Heart right ventricle (tissue), 16 donors: ENCODE measurements at regions of chr20 and their contacts with region 1.

Region 1: DNA sequence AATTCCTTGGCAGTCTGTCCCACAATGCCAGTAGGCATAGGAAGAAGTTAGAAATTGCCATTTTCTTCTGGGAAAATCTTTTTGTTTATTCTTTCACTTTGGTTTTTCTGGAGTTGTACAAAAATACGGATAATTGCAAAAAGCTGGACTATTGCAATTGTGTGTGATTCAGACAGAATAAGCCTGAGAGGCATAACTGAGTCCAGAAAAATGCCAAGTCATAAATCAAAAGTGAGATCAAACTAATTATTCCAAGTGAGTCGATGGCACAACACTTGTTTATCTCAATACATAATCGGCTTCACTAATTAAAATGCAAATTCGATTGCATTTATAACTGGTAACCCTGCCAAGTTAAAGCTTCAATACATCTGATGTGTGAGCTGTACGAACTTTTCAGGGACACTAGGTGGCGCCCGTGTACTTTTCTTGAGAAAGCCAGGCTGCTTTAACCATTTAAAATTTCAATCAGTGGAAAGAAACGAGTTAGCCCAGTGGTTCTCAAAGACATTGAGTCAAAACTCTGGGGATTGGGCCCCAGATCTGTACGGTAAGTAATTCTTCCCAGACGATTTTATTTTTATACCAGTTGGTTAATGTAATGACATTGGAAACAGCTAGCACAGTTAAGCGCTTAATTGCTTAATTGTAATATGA is 102.6 kb downstream of the LAMP5 start:
- DNase-seq: peak; percentile 24 to 27
- ATAC-seq: peak in 6 of 8 donors; percentile 51 to 71 (median 64)
- H3K4me3 ChIP-seq: no peak overlapping the region
- H3K27ac ChIP-seq: no peak overlapping the region
- H3K4me1 ChIP-seq: no peaks in the 10 kb centered on the region
- H3K27me3 ChIP-seq: peaks cover 0 to 30% (median 7%) of the 10 kb centered on the region in 7 donors
- CTCF ChIP-seq: peak; percentile 51 to 91 (median 89)

Region 2: GRCh38 chr20:8389381-8390036 is 1227.5 kb before region 1 on chr20:
- intact Hi-C with region 1: no loop called
- DNase-seq: no peak
- ATAC-seq: peak in 7 of 8 donors; percentile 12 to 59 (median 48)
- H3K4me3 ChIP-seq: no peak overlapping the region
- H3K27ac ChIP-seq: peak overlapping the region in 7 of 10 donors; percentile 6 to 61 (median 45)
- H3K4me1 ChIP-seq: peaks cover 0 to 63% (median 24%) of the 10 kb centered on the region in 9 donors
- H3K27me3 ChIP-seq: no peaks in the 10 kb centered on the region
- CTCF ChIP-seq: peak; percentile 47 to 72 (median 59)

Region 3: GRCh38 chr20:9689041-9689440 is 72.1 kb after region 1 on chr20:
- intact Hi-C with region 1: no loop called
- DNase-seq: no peak
- ATAC-seq: no peak
- H3K4me3 ChIP-seq: no peak overlapping the region
- H3K27ac ChIP-seq: no peak overlapping the region
- H3K4me1 ChIP-seq: no peaks in the 10 kb centered on the region
- H3K27me3 ChIP-seq: peaks cover 0 to 10% (median 0%) of the 10 kb centered on the region in 7 donors
- CTCF ChIP-seq: no peak

Region 4: GRCh38 chr20:9699181-9699580 is 82.2 kb after region 1 on chr20:
- intact Hi-C with region 1: no loop called
- DNase-seq: no peak
- ATAC-seq: no peak
- H3K4me3 ChIP-seq: no peak overlapping the region
- H3K27ac ChIP-seq: no peak overlapping the region
- H3K4me1 ChIP-seq: no peaks in the 10 kb centered on the region
- H3K27me3 ChIP-seq: peaks cover 0 to 19% (median 0%) of the 10 kb centered on the region in 7 donors
- CTCF ChIP-seq: no peak

Region 5: GRCh38 chr20:9903048-9903655 is 286.2 kb after region 1 on chr20:
- intact Hi-C with region 1: loop called in 1 of 10 experiments (anchors 10 kb)
- DNase-seq: no peak
- ATAC-seq: no peak
- H3K4me3 ChIP-seq: no peak overlapping the region
- H3K27ac ChIP-seq: no peak overlapping the region
- H3K4me1 ChIP-seq: no peaks in the 10 kb centered on the region
- H3K27me3 ChIP-seq: peaks cover 0 to 25% (median 0%) of the 10 kb centered on the region in 7 donors
- CTCF ChIP-seq: peak in 4 of 9 donors; percentile 10 to 32 (median 16)

Region 6: DNA sequence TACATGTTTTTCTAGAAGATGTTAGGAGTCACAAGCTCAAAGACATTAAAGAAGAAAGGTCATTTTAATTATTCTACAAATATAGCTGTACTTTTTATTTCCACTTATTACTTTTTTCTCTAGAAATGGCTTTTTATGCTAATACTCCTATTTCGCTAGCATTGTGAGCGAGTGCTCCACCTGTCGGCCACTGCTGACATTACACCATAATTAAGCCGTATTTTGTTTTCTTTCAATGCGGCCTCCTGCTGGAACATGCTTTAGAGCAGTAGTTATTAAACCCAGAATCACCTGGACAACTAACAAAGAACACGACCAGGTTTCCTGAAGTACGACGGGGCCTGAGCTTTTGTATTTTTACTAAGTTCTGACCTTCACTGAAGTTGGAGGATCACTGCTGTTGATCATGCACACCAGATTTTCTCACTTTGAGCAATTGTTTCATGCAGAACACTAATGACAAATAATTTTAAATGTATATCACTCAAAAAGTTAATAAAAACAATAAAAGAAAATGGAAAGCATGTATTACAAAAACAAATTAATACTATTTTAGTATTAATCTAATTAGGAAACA is 296.0 kb after region 1 on chr20:
- intact Hi-C with region 1: loop called in 9 of 10 experiments (anchors 2 to 10 kb)
- DNase-seq: peak; percentile 6 to 14
- ATAC-seq: no peak
- H3K4me3 ChIP-seq: no peak overlapping the region
- H3K27ac ChIP-seq: no peak overlapping the region
- H3K4me1 ChIP-seq: no peaks in the 10 kb centered on the region
- H3K27me3 ChIP-seq: peaks cover 0 to 20% (median 11%) of the 10 kb centered on the region in 7 donors
- CTCF ChIP-seq: peak; percentile 62 to 87 (median 78)

Region 7: GRCh38 chr20:10090588-10091166 is 473.7 kb after region 1 on chr20:
- intact Hi-C with region 1: loop called in 4 of 10 experiments (anchors 5 to 10 kb)
- DNase-seq: peak; percentile 19 to 46
- ATAC-seq: peak; percentile 55 to 80 (median 74)
- H3K4me3 ChIP-seq: no peak overlapping the region
- H3K27ac ChIP-seq: no peak overlapping the region
- H3K4me1 ChIP-seq: no peaks in the 10 kb centered on the region
- H3K27me3 ChIP-seq: peaks cover 0 to 3% (median 0%) of the 10 kb centered on the region in 7 donors
- CTCF ChIP-seq: peak; percentile 41 to 84 (median 77)

Region 8: DNA sequence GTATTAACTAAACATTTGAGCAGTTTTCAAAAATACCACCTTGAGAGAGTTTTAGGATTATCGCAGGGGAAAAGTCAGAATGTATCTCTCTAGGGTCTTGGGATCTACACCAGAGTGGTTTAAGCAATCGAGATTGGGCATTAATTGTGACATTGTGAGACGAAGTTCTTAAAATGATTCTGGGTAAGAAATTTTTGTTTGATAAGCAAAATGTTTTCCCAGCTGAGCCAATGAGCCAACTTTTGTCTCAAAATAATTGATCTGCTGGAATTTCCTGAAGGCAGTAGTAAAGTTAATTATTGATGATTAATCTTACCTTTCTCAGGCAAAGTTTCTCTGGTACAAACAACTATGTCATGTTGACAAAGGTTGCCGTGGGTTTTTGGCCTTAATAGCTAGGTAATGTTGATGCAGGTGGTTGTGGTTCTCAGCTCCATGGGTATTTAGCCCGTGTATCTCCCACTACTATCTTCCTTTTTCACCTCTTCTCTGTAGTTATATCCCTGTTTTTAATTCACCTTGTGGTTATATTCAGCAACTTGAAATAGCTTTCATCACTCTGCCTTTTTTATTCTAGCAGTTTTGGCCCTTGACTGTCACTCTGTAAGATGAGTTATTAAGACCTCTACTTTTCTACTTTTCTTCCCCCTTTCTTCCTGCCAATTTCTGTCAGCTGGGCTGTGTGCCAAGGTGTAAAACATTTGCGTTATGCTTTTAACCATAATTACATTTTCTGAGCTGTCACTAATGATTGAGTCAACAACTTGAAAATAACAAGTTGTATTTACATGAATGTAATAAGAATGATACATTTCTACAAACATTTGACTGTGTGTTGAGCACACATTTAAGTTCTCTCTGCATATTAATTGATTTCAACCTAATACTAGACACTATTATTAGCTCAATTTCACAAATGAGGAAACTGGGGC is 1932.5 kb after region 1 on chr20:
- intact Hi-C with region 1: loop called in 7 of 10 experiments (anchors 5 to 10 kb)
- DNase-seq: no peak
- ATAC-seq: no peak
- H3K4me3 ChIP-seq: no peak overlapping the region
- H3K27ac ChIP-seq: no peak overlapping the region
- H3K4me1 ChIP-seq: peaks cover 0 to under 1% (median 0%) of the 10 kb centered on the region in 9 donors
- H3K27me3 ChIP-seq: peaks cover 0 to 6% (median 0%) of the 10 kb centered on the region in 7 donors
- CTCF ChIP-seq: no peak